Left ventricle myocardium inferior (tissue), 1 donor: ENCODE measurements at regions of chr9 and their contacts with region 1.

Region 1: DNA sequence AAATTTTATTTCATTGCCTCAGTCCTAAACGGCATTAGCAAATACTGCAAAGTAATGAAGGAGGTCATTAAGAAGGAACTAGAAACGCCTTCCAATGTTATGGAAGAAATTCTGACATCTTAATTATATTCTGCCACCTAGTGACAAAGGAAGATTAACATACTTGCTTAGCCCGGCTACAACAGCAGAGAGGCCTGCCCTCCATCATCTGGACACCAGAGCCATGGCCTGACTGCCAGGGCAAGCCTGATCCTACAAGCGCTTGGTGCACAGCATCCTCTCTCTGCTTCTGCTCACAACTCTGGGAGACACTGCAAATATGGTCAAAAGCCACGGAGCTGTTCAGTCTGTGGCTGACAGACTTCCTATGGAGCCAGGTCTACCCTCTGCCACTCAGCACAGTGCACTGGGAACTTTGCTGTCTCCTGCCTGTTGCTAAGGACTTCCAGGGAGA is 87.3 kb upstream of the SLC44A1 start:
- DNase-seq: peak; percentile 41
- H3K4me3 ChIP-seq: no peak overlapping the region
- H3K27ac ChIP-seq: peak overlapping the region; percentile 25
- H3K4me1 ChIP-seq: peaks cover 3% of the 10 kb centered on the region
- H3K27me3 ChIP-seq: no peaks in the 10 kb centered on the region
- CTCF ChIP-seq: peak; percentile 71

Region 2: GRCh38 chr9:104863180-104863883 is 293.8 kb before region 1 on chr9:
- intact Hi-C with region 1: loop called (anchors 5 kb)
- DNase-seq: no peak
- H3K4me3 ChIP-seq: no peak overlapping the region
- H3K27ac ChIP-seq: no peak overlapping the region
- H3K4me1 ChIP-seq: peaks cover 46% of the 10 kb centered on the region
- H3K27me3 ChIP-seq: no peaks in the 10 kb centered on the region
- CTCF ChIP-seq: peak; percentile 85

Region 3: DNA sequence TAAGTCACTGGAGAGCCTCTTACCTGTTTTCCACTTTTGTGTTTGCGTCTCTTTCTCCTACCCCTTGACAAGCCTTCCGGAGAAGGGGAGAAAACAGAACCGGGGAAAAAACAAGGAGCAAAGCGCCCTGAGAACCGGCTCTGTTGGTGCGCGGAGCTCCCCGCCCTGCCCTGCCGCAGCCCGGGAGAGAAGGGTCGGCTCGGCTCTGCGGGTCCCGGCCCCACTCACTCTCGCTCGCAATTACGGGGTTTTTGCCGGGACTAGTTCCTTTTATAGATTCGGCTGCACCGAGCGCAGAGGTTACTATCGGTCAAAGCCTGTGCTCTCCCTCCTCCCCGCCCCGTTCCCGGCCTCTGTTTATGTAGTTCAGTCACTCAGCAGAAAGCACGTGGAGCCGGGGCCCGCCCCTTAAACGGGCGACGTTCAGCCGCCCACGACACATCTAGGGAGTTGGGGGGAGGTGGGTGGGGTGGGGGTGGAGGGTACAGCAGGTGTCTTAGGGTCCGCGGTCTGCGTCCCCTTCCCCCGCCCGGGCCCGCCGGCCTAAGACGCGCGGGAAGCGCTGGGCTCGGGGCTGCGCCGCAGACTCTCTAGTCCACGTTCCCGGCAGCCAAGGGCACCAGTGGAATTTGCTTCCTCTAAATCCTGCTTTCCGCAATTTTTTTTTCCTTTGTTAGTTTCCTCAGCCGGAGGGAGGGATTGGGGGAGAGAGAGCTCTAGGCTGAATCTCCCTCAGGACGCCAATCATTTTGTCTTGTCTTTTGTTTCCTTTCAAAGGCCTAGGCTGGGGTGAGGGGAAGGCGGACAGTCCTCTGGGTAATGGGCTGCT is 229.0 kb before region 1 on chr9 and contains the start of gene ABCA1:
- intact Hi-C with region 1: loop called (anchors 5 kb)
- DNase-seq: peak; percentile 94
- H3K4me3 ChIP-seq: peak within 1 kb of the TSS; percentile 97
- H3K27ac ChIP-seq: peak within 1 kb of the TSS; percentile 91
- H3K4me1 ChIP-seq: peaks cover 56% of the 10 kb centered on the region
- H3K27me3 ChIP-seq: no peaks in the 10 kb centered on the region
- CTCF ChIP-seq: no peak
- total RNA-seq, gene ABCA1: 10.8 TPM

Region 4: DNA sequence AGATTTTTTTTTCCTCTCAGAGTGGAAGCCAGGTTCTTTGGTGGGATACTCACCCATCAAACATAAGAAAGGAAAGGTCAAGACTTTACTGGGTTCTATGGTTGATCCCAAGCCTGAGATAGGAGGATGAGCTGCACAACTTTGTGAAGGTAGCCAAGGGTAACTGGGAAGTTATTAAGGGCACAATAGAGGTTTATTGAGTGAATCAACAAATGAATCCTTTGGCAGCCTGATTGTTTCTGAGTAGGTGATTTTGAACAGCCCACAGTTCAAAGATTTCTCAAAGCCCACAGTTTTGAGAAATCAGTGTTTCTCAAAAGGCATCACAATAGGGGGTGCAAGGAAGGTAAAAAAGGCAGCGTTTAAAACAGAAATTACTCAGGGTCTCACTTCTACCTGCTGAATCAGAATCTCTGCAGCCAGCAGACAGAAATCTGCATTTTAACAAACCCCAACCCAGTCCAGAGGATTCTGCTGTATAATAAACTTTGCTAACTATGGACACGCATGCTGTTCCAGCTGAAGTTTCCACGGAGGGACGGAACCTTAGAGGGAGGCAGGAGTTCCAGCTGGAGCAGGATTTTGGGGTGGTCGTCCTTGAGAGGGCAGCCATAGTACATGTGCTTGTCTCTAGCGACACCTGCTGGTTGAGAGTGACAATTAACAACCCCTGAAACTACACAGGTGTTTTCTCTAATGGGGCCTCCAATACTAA is 257.9 kb after region 1 on chr9:
- intact Hi-C with region 1: loop called (anchors 10 kb)
- DNase-seq: no peak
- H3K4me3 ChIP-seq: no peak overlapping the region
- H3K27ac ChIP-seq: no peak overlapping the region
- H3K4me1 ChIP-seq: peaks cover 3% of the 10 kb centered on the region
- H3K27me3 ChIP-seq: no peaks in the 10 kb centered on the region
- CTCF ChIP-seq: peak; percentile 88